ENCODE measurements at regions of chr20 and their contacts with region 1.

Region 1: GRCh38 chr20:20259533-20259932 is 108.4 kb upstream of the INSM1 start:
- DNase-seq: peak; percentile 0
- H3K4me3 ChIP-seq: no peak overlapping the region
- H3K27ac ChIP-seq: no peak overlapping the region
- H3K4me1 ChIP-seq: no peaks in the 10 kb centered on the region
- H3K27me3 ChIP-seq: no peaks in the 10 kb centered on the region
- CTCF ChIP-seq: no peak

Region 2: DNA sequence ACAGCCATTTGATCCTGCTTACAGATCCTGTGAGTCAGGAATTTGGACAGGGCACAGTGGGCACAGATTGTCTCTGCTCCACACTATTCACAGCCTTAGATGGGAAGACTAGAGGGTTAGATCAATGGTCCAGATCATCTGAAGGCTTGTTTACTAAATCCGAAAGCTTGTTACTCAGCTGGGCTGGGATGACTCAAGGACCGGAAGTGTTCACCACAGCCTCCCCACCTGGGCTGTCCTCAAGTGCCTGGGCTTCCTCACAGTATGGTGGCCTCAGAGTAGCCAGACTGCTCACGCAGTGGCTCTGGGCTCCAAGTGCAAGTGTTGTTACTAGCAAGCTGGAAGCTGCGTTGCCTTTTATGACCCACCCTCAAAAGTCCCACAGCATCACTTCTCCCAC is 32.9 kb after region 1 on chr20:
- CTCF ChIA-PET with region 1: no interaction called
- dilution Hi-C with region 1: loop called (anchors 5 kb)
- in situ Hi-C with region 1: no loop called
- intact Hi-C with region 1: no loop called
- DNase-seq: no peak
- H3K4me3 ChIP-seq: no peak overlapping the region
- H3K27ac ChIP-seq: no peak overlapping the region
- H3K4me1 ChIP-seq: no peaks in the 10 kb centered on the region
- H3K27me3 ChIP-seq: peaks cover 3% of the 10 kb centered on the region
- CTCF ChIP-seq: no peak